PC-9 (cell line): ENCODE measurements at regions of chr21 and their contacts with region 1.

Region 1: DNA sequence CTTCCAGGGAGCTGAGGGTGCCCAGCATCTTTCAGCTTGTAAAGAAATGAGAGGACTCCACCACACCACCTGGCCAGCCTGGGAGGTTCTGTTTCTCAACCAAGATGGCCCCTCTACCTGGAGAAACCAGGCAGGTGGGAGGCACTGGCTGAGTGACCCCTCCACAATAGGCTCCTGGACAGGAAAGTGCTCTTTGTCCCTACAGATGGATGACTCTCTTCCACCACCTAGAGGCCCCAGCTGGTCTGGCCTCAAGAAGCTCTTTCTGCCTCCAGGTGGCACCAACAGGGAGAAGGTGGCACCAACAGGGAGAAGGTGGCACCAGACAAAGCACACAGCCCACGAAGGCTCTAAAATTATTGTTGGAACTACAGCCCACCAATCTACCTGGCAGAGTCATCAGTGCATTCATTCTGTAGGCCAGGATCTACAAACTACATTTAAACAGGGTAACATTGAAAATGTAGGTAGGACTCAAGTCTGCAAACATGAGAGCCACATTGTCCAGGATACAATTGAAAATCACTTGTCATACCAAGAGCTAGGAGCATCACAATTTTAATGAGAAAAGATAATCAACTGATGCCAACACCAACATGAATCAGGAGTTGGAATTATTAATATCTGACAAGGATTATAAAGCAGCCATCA is 14.4 kb downstream of the TMPRSS3 start:
- DNase-seq: peak; percentile 47 to 59
- H3K4me3 ChIP-seq: no peak overlapping the region
- H3K27ac ChIP-seq: no peak overlapping the region
- H3K4me1 ChIP-seq: no peaks in the 10 kb centered on the region
- H3K27me3 ChIP-seq: no peaks in the 10 kb centered on the region
- CTCF ChIP-seq: peak; percentile 81

Region 2: GRCh38 chr21:42164064-42164789 is 217.2 kb before region 1 on chr21:
- CTCF ChIA-PET with region 1: no interaction called
- POLR2A ChIA-PET with region 1: no interaction called
- intact Hi-C with region 1: loop called (anchors 1 kb)
- DNase-seq: peak in 1 of 2 experiments; percentile 29
- H3K4me3 ChIP-seq: no peak overlapping the region
- H3K27ac ChIP-seq: no peak overlapping the region
- H3K4me1 ChIP-seq: no peaks in the 10 kb centered on the region
- H3K27me3 ChIP-seq: no peaks in the 10 kb centered on the region
- CTCF ChIP-seq: peak; percentile 71

Region 3: GRCh38 chr21:42337830-42338728 is 43.4 kb before region 1 on chr21:
- CTCF ChIA-PET with region 1: interaction called, 3 read pairs
- POLR2A ChIA-PET with region 1: no interaction called
- intact Hi-C with region 1: loop called (anchors 5 kb)
- DNase-seq: peak; percentile 45 to 56
- H3K4me3 ChIP-seq: no peak overlapping the region
- H3K27ac ChIP-seq: no peak overlapping the region
- H3K4me1 ChIP-seq: no peaks in the 10 kb centered on the region
- H3K27me3 ChIP-seq: no peaks in the 10 kb centered on the region
- CTCF ChIP-seq: peak; percentile 60

Region 4: DNA sequence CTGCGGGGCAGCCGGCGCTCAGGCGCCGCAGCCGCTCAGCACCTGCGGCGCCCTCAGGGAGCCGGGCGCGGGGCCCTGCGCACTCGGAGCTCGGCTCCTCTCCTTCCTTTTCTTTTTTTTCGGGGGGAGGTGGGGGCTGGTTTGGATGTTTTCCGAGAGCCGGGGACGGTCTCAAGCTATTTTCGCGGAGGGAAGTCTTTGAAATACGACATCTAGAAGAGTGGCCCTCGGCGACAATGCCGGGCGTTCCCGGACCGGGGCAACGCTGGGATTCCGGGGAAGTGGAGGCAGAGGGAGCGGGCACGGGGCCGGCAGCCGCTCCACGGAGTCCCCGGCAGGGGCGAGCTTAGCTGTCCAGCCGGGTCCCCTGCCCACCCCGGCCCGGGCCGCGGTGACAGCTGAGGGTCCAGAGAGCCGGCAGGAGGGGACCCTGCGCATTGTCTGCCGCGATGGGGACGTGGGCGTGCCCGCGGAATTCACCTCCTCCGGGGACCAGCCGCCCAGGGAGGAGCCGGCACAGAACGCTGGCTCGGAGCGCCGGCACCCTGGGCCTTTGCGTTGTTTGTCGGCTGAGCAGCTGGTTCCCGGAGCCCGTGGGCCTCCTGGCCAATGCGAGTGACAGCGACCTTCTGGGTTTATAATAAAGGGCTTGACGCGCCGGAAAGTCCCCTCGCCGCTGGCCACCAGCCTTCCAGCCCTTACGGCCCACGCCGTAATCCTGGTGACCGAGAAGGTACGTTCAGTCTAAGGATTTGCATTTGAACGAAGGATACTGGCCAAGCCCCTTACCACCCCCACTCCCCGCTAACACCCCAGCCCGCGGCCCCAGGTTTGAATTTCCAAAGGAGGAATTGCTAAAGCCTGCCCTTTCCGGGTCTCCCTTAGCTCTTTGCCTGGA is 132.8 kb after region 1 on chr21:
- CTCF ChIA-PET with region 1: no interaction called
- POLR2A ChIA-PET with region 1: no interaction called
- intact Hi-C with region 1: loop called (anchors 10 kb)
- DNase-seq: peak in 1 of 2 experiments; percentile 42
- H3K4me3 ChIP-seq: peak overlapping the region; percentile 71
- H3K27ac ChIP-seq: peak overlapping the region; percentile 93
- H3K4me1 ChIP-seq: peaks cover 44% of the 10 kb centered on the region
- H3K27me3 ChIP-seq: no peaks in the 10 kb centered on the region
- CTCF ChIP-seq: no peak